ENCODE measurements at regions of chr9 and their contacts with region 1.

Region 1: DNA sequence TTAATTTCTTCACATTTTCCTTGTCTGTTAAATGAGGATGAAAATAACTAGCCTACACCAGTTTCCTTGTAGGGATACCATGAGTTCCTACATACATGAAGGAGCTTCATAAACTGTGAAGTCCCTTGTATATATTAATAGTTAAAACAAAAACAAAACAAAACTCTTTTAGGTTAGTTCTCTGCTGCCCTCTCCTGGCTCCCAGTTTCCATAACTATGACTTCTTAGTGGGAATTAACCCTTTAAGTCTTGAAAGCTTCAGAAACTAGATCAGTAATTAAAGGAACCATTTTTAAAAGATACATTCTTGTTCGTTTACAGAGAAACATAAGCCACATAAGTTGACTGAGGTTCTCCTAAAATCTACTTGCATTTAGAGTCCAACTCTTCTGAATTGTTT is 500.0 kb upstream of the C9orf72 start:
- DNase-seq: no peak
- ATAC-seq: no peak
- H3K4me3 ChIP-seq: no peak overlapping the region
- H3K27ac ChIP-seq: no peak overlapping the region
- H3K4me1 ChIP-seq: no peaks in the 10 kb centered on the region
- H3K27me3 ChIP-seq: no peaks in the 10 kb centered on the region
- CTCF ChIP-seq: peak; percentile 15

Region 2: DNA sequence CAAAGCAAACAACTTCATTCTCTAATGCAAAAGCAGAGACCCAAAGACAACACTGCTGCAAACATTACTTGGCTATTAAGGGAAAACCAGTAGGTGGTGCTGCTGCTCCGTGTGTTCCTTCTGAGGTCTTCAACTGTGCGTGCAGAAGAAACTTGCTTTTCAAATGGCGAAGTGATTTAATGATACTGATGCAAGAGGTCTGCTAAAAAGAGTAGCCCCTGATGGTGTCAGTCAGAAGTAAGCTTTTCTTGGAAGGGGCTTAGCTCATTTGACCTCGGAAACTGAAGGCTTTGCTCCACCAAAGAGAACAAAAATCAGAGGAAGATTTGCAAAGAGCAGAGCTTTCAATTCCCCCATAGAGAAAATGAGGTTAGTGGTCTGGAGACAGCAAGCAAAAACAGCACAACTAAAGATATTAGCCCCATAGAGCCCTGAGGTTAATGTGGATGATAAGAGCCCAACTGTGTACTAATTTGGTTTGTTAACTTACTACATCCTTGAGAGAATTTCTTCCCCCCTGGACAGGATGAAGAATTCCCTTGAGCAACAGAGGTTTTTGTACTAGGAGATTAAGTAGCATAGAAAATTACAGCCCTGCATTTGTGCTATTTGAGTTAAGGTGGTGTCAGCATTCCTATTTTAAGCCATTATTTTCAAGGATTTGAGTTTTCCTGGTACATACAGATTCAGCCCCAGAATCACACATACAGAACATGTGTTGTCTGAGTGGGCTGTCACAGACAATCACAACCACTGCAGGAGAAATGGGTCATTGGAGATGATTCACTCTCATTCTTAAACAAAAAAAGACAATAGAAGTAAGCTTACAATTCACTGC is 346.8 kb before region 1 on chr9:
- intact Hi-C with region 1: loop called in 1 of 2 experiments (anchors 10 kb)
- DNase-seq: peak; percentile 19 to 51
- ATAC-seq: peak in 1 of 4 donors; percentile 55
- H3K4me3 ChIP-seq: no peak overlapping the region
- H3K27ac ChIP-seq: no peak overlapping the region
- H3K4me1 ChIP-seq: no peaks in the 10 kb centered on the region
- H3K27me3 ChIP-seq: peaks cover 0 to 3% (median 0%) of the 10 kb centered on the region in 3 donors
- CTCF ChIP-seq: peak; percentile 56